Activated CD4-positive, alpha-beta T cell treated with anti-CD3 and anti-CD28 coated beads for 36 hours (primary cell): ENCODE measurements at regions of chr14 and their contacts with region 1.

Region 1: GRCh38 chr14:56117765-56118610 is at the start of gene PELI2:
- DNase-seq: peak; percentile 85
- ATAC-seq: peak; percentile 79
- H3K4me3 Mint-ChIP-seq: peak within 1 kb of the TSS; percentile 81
- H3K27ac Mint-ChIP-seq: peak within 1 kb of the TSS; percentile 56
- H3K4me1 Mint-ChIP-seq: peaks cover 38% of the 10 kb centered on the region
- H3K27me3 Mint-ChIP-seq: peaks cover 22% of the 10 kb centered on the region
- total RNA-seq, gene PELI2: 2.2 to 3.8 TPM

Region 2: GRCh38 chr14:55411426-55412389 is 706.3 kb before region 1 on chr14 and contains the start of gene ATG14:
- CTCF ChIA-PET with region 1: no interaction called
- POLR2A ChIA-PET with region 1: no interaction called
- intact Hi-C with region 1: loop called in 1 of 2 experiments (anchors 10 kb)
- DNase-seq: peak; percentile 88
- ATAC-seq: peak; percentile 99
- H3K4me3 Mint-ChIP-seq: peak within 1 kb of the TSS; percentile 79
- H3K27ac Mint-ChIP-seq: peak within 1 kb of the TSS; percentile 82
- H3K4me1 Mint-ChIP-seq: peaks cover 27% of the 10 kb centered on the region
- H3K27me3 Mint-ChIP-seq: no peaks in the 10 kb centered on the region
- total RNA-seq, gene ATG14: 5.0 to 5.1 TPM

Region 3: GRCh38 chr14:55832122-55832911 is 285.7 kb before region 1 on chr14:
- CTCF ChIA-PET with region 1: no interaction called
- POLR2A ChIA-PET with region 1: no interaction called
- intact Hi-C with region 1: no loop called
- DNase-seq: no peak
- ATAC-seq: no peak
- H3K4me3 Mint-ChIP-seq: no peak overlapping the region
- H3K27ac Mint-ChIP-seq: no peak overlapping the region
- H3K4me1 Mint-ChIP-seq: no peaks in the 10 kb centered on the region
- H3K27me3 Mint-ChIP-seq: peaks cover 2% of the 10 kb centered on the region

Region 4: GRCh38 chr14:56131865-56132833 is 14.2 kb after region 1 on chr14:
- CTCF ChIA-PET with region 1: interaction called, 7 read pairs
- POLR2A ChIA-PET with region 1: interaction called, 6 read pairs
- intact Hi-C with region 1: loop called in 1 of 2 experiments (anchors 1 kb)
- DNase-seq: no peak
- ATAC-seq: peak; percentile 11
- H3K4me3 Mint-ChIP-seq: peak overlapping the region; percentile 11
- H3K27ac Mint-ChIP-seq: peak overlapping the region; percentile 47
- H3K4me1 Mint-ChIP-seq: peaks cover 43% of the 10 kb centered on the region
- H3K27me3 Mint-ChIP-seq: peaks cover 11% of the 10 kb centered on the region

Region 5: DNA sequence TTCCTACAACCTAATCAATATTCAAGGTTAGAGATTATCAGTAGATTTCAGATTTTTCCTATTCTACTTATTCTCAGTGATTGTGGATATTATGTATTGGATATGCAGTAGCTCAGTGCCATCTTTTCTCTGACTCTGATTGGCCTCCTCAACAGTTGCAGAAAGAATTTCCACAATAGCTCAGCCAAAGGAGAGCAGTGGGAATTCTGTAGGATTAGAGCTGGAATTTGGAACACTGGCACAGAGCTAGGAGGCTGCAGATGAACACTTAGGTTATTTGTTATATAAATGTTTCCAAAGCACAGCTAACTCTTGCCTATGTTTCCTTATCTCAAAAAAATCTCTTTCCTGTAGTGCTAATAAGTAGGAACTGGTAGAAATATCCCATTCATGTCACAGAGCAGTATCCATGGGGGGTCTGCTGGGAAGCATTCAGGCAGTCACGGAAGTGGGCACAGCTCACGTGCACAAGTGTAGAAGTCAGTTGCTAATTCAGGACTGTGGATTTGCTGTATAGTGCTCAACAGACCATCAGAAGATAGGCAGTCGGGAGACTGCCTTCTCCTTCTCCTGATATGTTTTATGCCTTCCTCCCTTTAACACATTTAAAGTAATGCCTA is 345.4 kb after region 1 on chr14:
- CTCF ChIA-PET with region 1: no interaction called
- POLR2A ChIA-PET with region 1: no interaction called
- intact Hi-C with region 1: no loop called
- DNase-seq: no peak
- ATAC-seq: no peak
- H3K4me3 Mint-ChIP-seq: no peak overlapping the region
- H3K27ac Mint-ChIP-seq: no peak overlapping the region
- H3K4me1 Mint-ChIP-seq: no peaks in the 10 kb centered on the region
- H3K27me3 Mint-ChIP-seq: peaks cover 26% of the 10 kb centered on the region

Region 6: GRCh38 chr14:56579345-56580220 is 461.6 kb after region 1 on chr14 and contains the start of gene TMEM260:
- CTCF ChIA-PET with region 1: no interaction called
- POLR2A ChIA-PET with region 1: no interaction called
- intact Hi-C with region 1: loop called in 1 of 2 experiments (anchors 10 kb)
- DNase-seq: peak; percentile 93
- ATAC-seq: peak; percentile 89
- H3K4me3 Mint-ChIP-seq: peak within 1 kb of the TSS; percentile 82
- H3K27ac Mint-ChIP-seq: peak within 1 kb of the TSS; percentile 95
- H3K4me1 Mint-ChIP-seq: peaks cover 33% of the 10 kb centered on the region
- H3K27me3 Mint-ChIP-seq: no peaks in the 10 kb centered on the region
- total RNA-seq, gene TMEM260: 15.2 to 17.9 TPM